Dendritic cell treated with granulocyte-macrophage colony-stimulating factor and Interleukin-4, amounts not matched to agents 40 ng/mL and 50 ng/mL, for 4 days (primary cell): ENCODE measurements at regions of chr6 and their contacts with region 1.

Region 1: GRCh38 chr6:36724514-36725390 is 27.1 kb downstream of the RAB44 start:
- H3K4me3 Mint-ChIP-seq: no peak overlapping the region
- H3K27ac Mint-ChIP-seq: peak overlapping the region; percentile 22
- H3K4me1 Mint-ChIP-seq: peaks cover 43% of the 10 kb centered on the region
- H3K27me3 Mint-ChIP-seq: no peaks in the 10 kb centered on the region

Region 2: GRCh38 chr6:36692220-36692619 is 32.5 kb before region 1 on chr6:
- intact Hi-C with region 1: loop called (anchors 5 kb)
- H3K4me3 Mint-ChIP-seq: no peak overlapping the region
- H3K27ac Mint-ChIP-seq: peak overlapping the region; percentile 53
- H3K4me1 Mint-ChIP-seq: peaks cover 39% of the 10 kb centered on the region
- H3K27me3 Mint-ChIP-seq: no peaks in the 10 kb centered on the region